Activated CD4-positive, alpha-beta T cell treated with anti-CD3 and anti-CD28 coated beads, Interleukin-2, amount 10 ng/mL, durations not matched to agents 24 days and 14 days (primary cell): ENCODE measurements at regions of chr14 and their contacts with region 1.

Region 1: DNA sequence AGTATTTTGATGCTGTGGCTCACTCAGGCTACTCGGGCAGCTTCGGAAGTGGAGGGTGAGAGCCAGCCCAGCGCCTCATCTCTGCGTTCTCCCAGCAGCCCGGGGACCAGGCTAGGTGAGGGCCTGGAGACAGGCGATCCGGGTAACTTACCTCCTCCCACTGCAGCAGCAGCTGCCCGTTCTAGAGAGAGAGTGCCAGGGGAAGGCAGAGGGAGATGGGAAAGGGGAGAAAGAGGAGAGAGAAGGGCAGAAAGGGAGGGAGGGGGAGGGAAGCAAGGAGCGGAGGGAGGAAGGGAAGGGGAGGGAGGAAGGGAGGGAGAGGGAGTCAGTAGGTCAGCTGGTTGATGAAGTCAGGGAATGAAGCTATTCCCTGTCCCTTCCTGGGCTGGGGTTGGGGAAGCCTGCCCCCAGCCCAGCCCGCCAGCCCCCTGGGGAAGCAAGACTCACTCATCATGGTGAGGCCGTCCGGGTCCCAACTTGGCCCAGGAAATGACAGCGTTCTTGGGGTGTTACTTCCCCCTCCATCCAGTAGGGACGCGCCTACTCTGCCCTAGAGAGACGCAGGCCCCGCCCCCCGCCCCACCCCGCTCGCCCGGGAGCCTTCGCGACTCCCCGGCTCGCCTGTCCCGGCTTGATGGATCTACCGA is at the start of gene IFI27L2:
- DNase-seq: peak; percentile 91
- H3K4me3 Mint-ChIP-seq: peak within 1 kb of the TSS; percentile 96
- H3K27ac Mint-ChIP-seq: peak within 1 kb of the TSS; percentile 91
- H3K4me1 Mint-ChIP-seq: peaks cover 24% of the 10 kb centered on the region
- H3K27me3 Mint-ChIP-seq: peaks cover 20% of the 10 kb centered on the region
- total RNA-seq, gene IFI27L2: 37.3 and 38.8 TPM in 2 replicates

Region 2: GRCh38 chr14:93789228-93790130 is 339.8 kb before region 1 on chr14:
- intact Hi-C with region 1: no loop called
- DNase-seq: no peak
- H3K4me3 Mint-ChIP-seq: no peak overlapping the region
- H3K27ac Mint-ChIP-seq: no peak overlapping the region
- H3K4me1 Mint-ChIP-seq: peaks cover 2% of the 10 kb centered on the region
- H3K27me3 Mint-ChIP-seq: peaks cover 60% of the 10 kb centered on the region

Region 3: DNA sequence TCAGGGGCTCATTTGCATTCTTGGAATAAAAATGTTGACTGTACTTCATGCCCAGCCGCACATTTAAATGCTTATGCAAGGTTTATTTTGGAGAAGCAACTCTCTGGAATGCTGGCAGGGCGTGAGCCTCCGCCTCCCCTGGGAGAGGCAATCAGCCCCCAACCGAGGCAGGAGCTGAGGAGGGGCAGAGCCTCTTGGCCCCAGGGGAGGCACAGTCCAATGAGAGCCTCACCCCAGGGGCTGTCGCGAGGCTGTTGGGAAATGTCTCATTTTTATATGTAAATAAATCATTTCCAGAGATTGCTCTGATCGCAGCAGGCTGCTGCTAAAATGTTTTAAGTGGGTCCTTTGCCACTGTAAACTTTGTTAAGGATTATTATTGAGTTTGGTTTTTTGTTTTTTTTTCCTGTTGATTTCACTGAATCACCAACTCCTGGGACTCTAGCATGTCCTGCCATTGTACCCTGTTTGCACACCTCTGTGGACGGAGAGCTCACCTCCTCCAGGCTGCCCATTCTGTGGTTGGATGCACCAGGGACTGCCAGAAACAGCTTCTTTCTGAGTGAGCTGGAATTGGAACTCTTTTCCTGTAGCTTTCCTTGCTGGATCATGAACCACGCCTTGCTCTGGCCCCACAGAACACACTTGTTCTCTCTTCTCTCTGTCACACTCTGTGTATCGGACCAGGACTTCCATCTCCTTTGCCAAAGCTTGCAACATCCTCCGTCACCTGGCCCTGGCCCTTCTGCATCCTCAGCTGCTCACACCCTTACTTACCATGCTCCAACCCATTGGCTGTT is 249.0 kb before region 1 on chr14:
- intact Hi-C with region 1: no loop called
- DNase-seq: no peak
- H3K4me3 Mint-ChIP-seq: no peak overlapping the region
- H3K27ac Mint-ChIP-seq: no peak overlapping the region
- H3K4me1 Mint-ChIP-seq: peaks cover 5% of the 10 kb centered on the region
- H3K27me3 Mint-ChIP-seq: peaks cover 8% of the 10 kb centered on the region

Region 4: DNA sequence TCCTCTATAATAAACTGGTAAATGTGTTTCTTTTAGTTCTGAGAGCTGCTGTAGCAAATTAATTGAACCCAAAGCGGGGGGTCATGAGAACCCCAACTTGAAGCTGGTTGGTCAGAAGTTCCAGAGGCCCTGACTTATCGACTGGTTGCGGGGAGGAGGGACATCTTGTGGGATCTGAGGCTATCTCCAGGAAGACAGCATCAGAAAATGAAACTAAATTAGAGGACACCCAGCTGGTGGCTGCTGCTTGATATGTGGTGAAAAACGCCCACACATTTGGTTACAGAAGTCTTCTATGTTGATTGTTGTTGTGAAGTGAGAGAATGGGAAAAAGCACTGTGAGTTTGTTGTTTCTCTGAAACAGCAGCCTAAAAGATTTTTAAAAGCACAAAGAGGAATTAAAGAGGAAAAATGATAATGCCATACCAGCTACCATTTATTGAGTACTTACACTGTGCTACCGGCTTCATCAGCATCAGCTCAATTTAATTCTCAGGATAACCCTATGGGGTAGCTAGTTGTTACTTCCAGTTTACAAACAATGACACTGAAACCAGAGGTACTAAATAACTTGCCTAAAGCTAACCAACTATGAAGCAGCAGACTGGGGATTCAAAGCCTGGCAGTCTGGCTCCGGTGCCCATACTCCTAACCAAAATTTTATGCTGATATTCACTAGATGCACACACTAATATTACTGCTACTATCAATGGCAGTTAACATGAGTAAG is 72.5 kb before region 1 on chr14:
- intact Hi-C with region 1: loop called (anchors 1 kb)
- DNase-seq: peak; percentile 86
- H3K4me3 Mint-ChIP-seq: peak overlapping the region; percentile 45
- H3K27ac Mint-ChIP-seq: peak overlapping the region; percentile 73
- H3K4me1 Mint-ChIP-seq: peaks cover 53% of the 10 kb centered on the region
- H3K27me3 Mint-ChIP-seq: no peaks in the 10 kb centered on the region

Region 5: GRCh38 chr14:94074534-94074933 is 54.7 kb before region 1 on chr14:
- intact Hi-C with region 1: no loop called
- DNase-seq: no peak
- H3K4me3 Mint-ChIP-seq: no peak overlapping the region
- H3K27ac Mint-ChIP-seq: no peak overlapping the region
- H3K4me1 Mint-ChIP-seq: peaks cover 38% of the 10 kb centered on the region
- H3K27me3 Mint-ChIP-seq: no peaks in the 10 kb centered on the region

Region 6: GRCh38 chr14:94173885-94174603 is 44.8 kb after region 1 on chr14 and contains the start of gene PPP4R4:
- intact Hi-C with region 1: loop called (anchors 1 kb)
- DNase-seq: peak; percentile 97
- H3K4me3 Mint-ChIP-seq: peak within 1 kb of the TSS; percentile 88
- H3K27ac Mint-ChIP-seq: peak within 1 kb of the TSS; percentile 70
- H3K4me1 Mint-ChIP-seq: peaks cover 17% of the 10 kb centered on the region
- H3K27me3 Mint-ChIP-seq: peaks cover 54% of the 10 kb centered on the region
- total RNA-seq, gene PPP4R4: 2.7 and 3.1 TPM in 2 replicates

Region 7: GRCh38 chr14:94485944-94486841 is 357.0 kb after region 1 on chr14:
- intact Hi-C with region 1: loop called (anchors 5 kb)
- DNase-seq: peak; percentile 85
- H3K4me3 Mint-ChIP-seq: no peak overlapping the region
- H3K27ac Mint-ChIP-seq: no peak overlapping the region
- H3K4me1 Mint-ChIP-seq: peaks cover 1% of the 10 kb centered on the region
- H3K27me3 Mint-ChIP-seq: no peaks in the 10 kb centered on the region